Posterior vena cava (tissue), 2 donors: ENCODE measurements at regions of chr17 and their contacts with region 1.

Region 1: GRCh38 chr17:34012709-34013375 is 242.2 kb upstream of the CCL2 start:
- DNase-seq: no peak

Region 2: DNA sequence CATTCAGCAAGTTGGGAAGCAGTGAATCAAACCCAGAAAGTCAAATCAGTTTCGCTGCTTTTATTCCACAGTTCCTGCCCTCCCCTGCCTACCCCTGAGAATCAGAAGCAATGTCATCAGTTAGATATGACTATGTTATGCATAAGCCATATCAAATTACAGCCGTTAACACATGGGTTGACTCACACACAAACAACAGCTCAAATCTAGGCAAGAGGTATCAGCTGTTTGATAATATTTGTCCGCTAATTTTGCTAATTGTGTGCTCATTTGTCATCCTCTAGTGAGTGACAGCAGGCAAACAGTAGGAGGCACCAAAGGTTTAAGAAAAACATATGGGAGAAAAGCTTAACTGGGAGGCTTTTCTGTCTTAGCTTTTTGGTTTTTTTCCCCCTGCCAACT is 85.1 kb before region 1 on chr17:
- intact Hi-C with region 1: loop called in 1 of 2 experiments (anchors 10 kb)
- DNase-seq: no peak

Region 3: GRCh38 chr17:33949100-33949499 is 63.7 kb before region 1 on chr17:
- intact Hi-C with region 1: loop called in 1 of 2 experiments (anchors 10 kb)
- DNase-seq: no peak

Region 4: DNA sequence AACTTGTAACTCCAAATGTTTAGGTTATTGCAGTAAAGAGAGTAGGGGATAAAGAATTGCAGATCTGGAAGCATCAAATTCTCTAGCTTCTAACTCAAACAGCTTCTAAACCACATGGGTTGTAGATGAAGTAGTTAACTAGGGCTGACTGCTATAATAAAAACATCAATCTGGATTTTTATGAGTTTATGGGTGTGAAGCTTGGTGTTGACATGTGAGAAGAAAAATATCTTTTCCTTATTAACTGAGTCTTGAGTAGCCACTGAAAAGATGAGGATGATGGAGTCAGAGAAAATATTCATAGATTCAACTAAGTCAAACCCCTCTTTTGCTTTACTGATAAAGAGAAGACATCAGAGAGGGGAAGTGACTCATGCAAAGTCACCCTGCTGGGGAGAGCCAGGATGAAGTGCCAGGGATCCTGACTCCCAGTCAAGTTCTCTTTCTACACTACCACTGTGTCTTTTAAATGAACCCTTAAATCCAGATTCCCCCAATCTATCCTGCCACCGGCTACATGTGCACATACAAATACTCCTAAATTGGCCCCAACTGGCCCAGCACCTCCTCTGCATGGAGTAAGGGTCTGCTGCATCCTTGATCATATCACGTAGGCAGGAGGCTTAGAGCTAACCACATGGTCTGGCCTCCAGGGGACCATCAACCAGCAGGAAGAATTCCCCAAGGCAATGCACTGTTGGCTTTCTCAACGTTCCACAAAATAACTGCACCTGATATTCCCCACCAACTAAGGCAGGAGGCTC is 21.7 kb before region 1 on chr17:
- intact Hi-C with region 1: no loop called
- DNase-seq: no peak